Tibial artery (tissue), 4 donors: ENCODE measurements at regions of chr2 and their contacts with region 1.

Region 1: DNA sequence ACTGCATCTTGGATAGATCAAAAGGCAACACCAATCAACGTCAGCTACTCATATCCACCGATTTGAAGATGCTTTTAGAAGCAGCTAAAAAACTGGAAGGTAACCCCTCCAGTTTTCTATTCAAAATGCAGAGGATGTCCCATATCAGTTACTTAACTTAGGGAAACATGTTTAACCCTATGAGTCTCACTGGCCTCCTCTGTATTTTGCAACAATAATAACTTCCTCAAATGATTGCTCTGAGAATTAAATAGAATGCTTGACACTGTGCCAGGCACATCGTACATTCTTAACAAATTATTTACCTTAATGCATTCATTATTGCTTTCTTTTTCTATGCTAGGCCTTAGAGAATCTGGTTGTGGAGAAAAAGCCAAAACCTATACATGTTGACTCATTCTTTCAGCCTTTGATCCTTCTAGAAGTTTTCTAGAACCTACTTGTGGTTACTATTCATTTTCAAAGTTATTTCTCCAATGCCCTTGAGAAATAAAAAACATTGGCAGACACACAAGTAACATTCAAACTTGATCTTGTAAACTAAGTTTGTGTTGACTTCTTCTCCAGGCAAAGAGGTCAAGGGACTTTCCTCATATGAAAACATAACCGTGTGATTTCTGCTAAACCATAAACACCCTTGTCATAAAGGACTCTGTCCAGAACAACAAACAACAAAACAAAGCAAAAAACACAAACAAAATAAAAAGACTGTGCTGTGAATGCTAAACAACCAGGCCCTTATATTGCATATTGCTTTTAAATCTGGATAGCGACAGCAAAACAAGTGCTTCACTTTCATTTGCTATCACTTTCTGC is 4.6 kb downstream of the DOCK10 start:
- DNase-seq: no peak
- H3K4me3 ChIP-seq: no peak overlapping the region
- H3K27ac ChIP-seq: no peak overlapping the region
- H3K4me1 ChIP-seq: peaks cover 0 to 23% (median 7%) of the 10 kb centered on the region in 4 donors
- H3K27me3 ChIP-seq: no peaks in the 10 kb centered on the region
- CTCF ChIP-seq: no peak

Region 2: GRCh38 chr2:224347176-224348051 is 690.2 kb before region 1 on chr2:
- intact Hi-C with region 1: loop called (anchors 10 kb)
- DNase-seq: no peak
- H3K4me3 ChIP-seq: no peak overlapping the region
- H3K27ac ChIP-seq: no peak overlapping the region
- H3K4me1 ChIP-seq: no peaks in the 10 kb centered on the region
- H3K27me3 ChIP-seq: no peaks in the 10 kb centered on the region
- CTCF ChIP-seq: no peak